K562 (cell line): ENCODE measurements at regions of chr2 and their contacts with region 1.

Region 1: DNA sequence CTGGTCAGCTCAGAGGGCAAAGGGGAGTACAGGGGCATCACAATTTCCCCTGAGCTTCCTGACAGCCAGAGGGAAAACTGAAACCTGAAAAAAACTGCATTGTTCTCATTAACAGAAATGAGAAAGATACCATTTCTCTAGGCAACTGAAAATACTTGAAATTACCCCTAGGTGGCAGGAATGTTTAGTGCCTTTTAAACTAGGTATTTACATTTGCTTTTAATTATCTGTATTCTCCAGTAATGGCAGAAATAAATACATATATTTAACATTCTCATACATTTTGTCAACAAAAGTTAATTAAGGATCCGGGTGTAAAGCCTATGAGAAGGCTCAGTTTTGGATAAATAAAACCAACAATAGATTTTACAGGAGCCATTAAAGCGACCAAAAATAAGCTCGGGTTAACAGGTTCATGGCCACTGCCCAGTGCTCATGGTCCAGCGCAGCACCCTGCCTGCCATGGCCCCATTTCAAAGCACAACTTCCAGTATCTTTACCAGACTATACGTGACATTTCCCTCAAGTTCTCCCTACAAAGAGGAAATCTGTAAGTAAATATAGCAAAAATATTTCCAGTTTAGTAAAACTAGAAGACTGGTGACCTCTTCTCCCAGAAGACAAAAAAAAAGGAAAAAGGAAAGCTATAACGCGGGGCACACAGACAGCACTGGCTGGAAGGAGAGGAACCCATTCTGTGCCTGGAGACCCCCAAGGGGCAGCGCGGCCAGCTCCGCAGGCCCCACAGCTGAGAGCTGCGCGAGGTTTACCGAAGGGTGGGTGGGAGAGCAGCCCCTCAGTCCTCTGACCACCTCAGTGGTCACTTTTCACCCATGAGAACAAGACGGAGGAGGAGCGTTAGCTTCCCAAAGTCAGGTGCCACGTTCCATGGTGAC is 34.7 kb downstream of the RPL31 start:
- DNase-seq: peak in 3 of 4 experiments; percentile 11 to 29 (median 22)
- ATAC-seq: no peak
- H3K4me3 ChIP-seq: no peak overlapping the region
- H3K27ac ChIP-seq: no peak overlapping the region
- H3K4me1 ChIP-seq: peaks cover 5% of the 10 kb centered on the region in 2 experiments; a peak in 2 of 5 replicates
- H3K27me3 ChIP-seq: peaks cover 9 to 44% of the 10 kb centered on the region in 2 experiments; a peak in 3 of 5 replicates
- CTCF ChIP-seq: peak; percentile 42 to 74 (median 42); a peak in 4 of 6 replicates
- EP300 ChIP-seq: no peak
- POLR2A ChIP-seq: no peak
- RAD21 ChIP-seq: peak; percentile 46 to 66; a peak in 3 of 4 replicates

Region 2: GRCh38 chr2:101151141-101151858 is 114.5 kb after region 1 on chr2 and contains the start of gene TBC1D8:
- CTCF ChIA-PET with region 1: interaction called, 17 read pairs
- POLR2A ChIA-PET with region 1: no interaction called
- in situ Hi-C with region 1: no loop called
- intact Hi-C with region 1: loop called (anchors 2 kb)
- DNase-seq: peak; percentile 84 to 97 (median 94)
- ATAC-seq: peak; percentile 92
- H3K4me3 ChIP-seq: peak within 1 kb of the TSS; percentile 50
- H3K27ac ChIP-seq: no peak within 1 kb of the TSS
- H3K4me1 ChIP-seq: peaks cover 2 to 15% of the 10 kb centered on the region in 2 experiments; a peak in 4 of 5 replicates
- H3K27me3 ChIP-seq: peaks cover 41 to 64% of the 10 kb centered on the region in 2 experiments
- CTCF ChIP-seq: no peak
- EP300 ChIP-seq: no peak
- POLR2A ChIP-seq: peak; percentile 57
- RAD21 ChIP-seq: 0 out of 4 replicates have a peak, but pooled peaks of 1 of the 2 experiments have one; percentile 10
- polyA plus RNA-seq, gene TBC1D8: 0.41 to 0.70 TPM

Region 3: DNA sequence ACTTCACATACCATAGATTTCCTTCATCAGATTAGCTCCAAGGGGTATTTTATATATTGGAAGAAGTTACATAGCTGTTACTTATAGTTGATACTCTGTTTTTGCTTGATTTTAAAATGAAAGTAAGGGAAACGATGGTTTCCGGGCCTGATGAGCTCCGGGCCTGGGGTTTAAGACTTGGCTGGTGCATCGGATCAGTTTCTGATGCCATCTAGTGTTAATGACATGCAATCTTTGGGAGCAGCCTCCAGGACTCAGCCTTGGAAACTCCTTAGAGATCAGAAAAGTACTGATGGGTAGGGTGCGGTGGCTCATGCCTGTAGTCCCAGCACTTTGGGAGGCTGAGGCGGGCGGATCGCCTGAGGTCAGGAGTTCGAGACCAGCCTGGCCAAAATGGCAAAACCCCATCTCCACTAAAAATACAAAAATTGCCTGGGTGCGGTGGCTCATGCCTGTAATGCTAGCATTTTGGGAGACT is 168.8 kb after region 1 on chr2:
- CTCF ChIA-PET with region 1: no interaction called
- POLR2A ChIA-PET with region 1: no interaction called
- in situ Hi-C with region 1: no loop called
- intact Hi-C with region 1: loop called (anchors 2 kb)
- DNase-seq: peak in 2 of 4 experiments; percentile 30 to 57
- ATAC-seq: peak; percentile 83
- H3K4me3 ChIP-seq: no peak overlapping the region
- H3K27ac ChIP-seq: no peak overlapping the region
- H3K4me1 ChIP-seq: peaks cover 11 to 15% of the 10 kb centered on the region in 2 experiments
- H3K27me3 ChIP-seq: no peaks in the 10 kb centered on the region
- CTCF ChIP-seq: peak; percentile 43 to 63 (median 46); a peak in 5 of 6 replicates
- EP300 ChIP-seq: no peak
- POLR2A ChIP-seq: no peak
- RAD21 ChIP-seq: peak; percentile 60 to 62

Region 4: GRCh38 chr2:101330253-101330933 is 293.6 kb after region 1 on chr2:
- CTCF ChIA-PET with region 1: no interaction called
- POLR2A ChIA-PET with region 1: no interaction called
- in situ Hi-C with region 1: loop called (anchors 10 kb)
- intact Hi-C with region 1: no loop called
- DNase-seq: no peak
- ATAC-seq: peak; percentile 57; the same call in 2 of the 3 replicates
- H3K4me3 ChIP-seq: no peak overlapping the region
- H3K27ac ChIP-seq: no peak overlapping the region
- H3K4me1 ChIP-seq: no peaks in the 10 kb centered on the region; a peak in 1 of 5 replicates
- H3K27me3 ChIP-seq: peaks cover 11 to 35% of the 10 kb centered on the region in 2 experiments
- CTCF ChIP-seq: no peak
- EP300 ChIP-seq: no peak
- POLR2A ChIP-seq: no peak
- RAD21 ChIP-seq: no peak

Region 5: DNA sequence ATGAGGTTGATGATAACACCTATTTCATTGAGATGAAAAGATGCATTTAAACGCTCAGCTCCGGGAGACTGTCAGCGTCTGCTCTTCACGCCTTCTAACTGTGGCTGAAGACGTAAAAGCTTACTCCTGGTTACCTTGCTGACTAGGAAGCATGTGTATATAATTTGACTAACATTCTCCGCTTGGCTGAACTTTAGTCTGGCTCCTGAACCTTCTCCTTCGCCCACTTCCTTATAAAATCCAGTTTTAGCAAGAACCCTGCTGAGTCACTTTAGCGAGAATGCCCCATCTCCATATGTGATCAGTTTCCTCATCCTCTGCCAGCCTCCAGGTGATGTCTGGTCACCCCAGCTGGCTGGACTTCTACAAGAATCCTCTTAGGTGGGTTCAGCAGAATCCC is 363.2 kb after region 1 on chr2:
- CTCF ChIA-PET with region 1: no interaction called
- POLR2A ChIA-PET with region 1: no interaction called
- in situ Hi-C with region 1: no loop called
- intact Hi-C with region 1: loop called (anchors 10 kb)
- DNase-seq: no peak
- ATAC-seq: no peak
- H3K4me3 ChIP-seq: no peak overlapping the region
- H3K27ac ChIP-seq: no peak overlapping the region
- H3K4me1 ChIP-seq: no peaks in the 10 kb centered on the region
- H3K27me3 ChIP-seq: peaks cover 34 to 59% of the 10 kb centered on the region in 2 experiments
- CTCF ChIP-seq: no peak
- EP300 ChIP-seq: no peak
- POLR2A ChIP-seq: no peak
- RAD21 ChIP-seq: no peak